ENCODE measurements at regions of chr5 and their contacts with region 1.

Region 1: GRCh38 chr5:138178516-138179276 is at the starts of genes BRD8 and KIF20A:
- DNase-seq: peak; percentile 98
- ATAC-seq: peak; percentile 91
- H3K4me3 Mint-ChIP-seq: no peak within 1 kb of the TSS
- H3K27ac Mint-ChIP-seq: no peak within 1 kb of the TSS
- H3K4me1 Mint-ChIP-seq: peaks cover 37% of the 10 kb centered on the region
- H3K27me3 Mint-ChIP-seq: no peaks in the 10 kb centered on the region
- total RNA-seq, gene BRD8: 74.1 to 86.7 TPM
- total RNA-seq, gene KIF20A: 61.7 to 64.3 TPM

Region 2: DNA sequence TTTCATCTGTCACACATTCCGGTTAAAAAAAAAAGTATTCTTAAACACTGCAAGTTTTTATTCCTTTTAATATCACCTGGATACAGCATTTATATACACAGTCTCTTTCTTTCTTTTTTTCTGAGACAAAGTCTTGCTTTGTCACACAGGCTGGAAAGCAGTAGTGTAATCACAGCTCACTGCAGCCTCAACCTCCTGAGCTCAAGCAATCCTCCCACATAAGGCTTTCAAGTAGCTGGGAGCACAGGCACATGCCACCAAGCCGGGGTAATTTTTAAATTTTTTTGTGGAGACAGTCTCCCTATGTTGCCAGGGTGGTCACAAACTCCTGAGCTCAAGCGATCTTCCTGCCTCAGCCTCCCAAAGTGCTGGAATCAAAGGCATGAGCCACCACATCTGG is 14.1 kb after region 1 on chr5:
- CTCF ChIA-PET with region 1: interaction called, 12 read pairs
- DNase-seq: no peak
- ATAC-seq: no peak
- H3K4me3 Mint-ChIP-seq: no peak overlapping the region
- H3K27ac Mint-ChIP-seq: no peak overlapping the region
- H3K4me1 Mint-ChIP-seq: no peaks in the 10 kb centered on the region
- H3K27me3 Mint-ChIP-seq: no peaks in the 10 kb centered on the region

Region 3: GRCh38 chr5:138316355-138316754 is 137.7 kb after region 1 on chr5:
- CTCF ChIA-PET with region 1: no interaction called
- DNase-seq: no peak
- ATAC-seq: no peak
- H3K4me3 Mint-ChIP-seq: no peak overlapping the region
- H3K27ac Mint-ChIP-seq: no peak overlapping the region
- H3K4me1 Mint-ChIP-seq: no peaks in the 10 kb centered on the region
- H3K27me3 Mint-ChIP-seq: no peaks in the 10 kb centered on the region

Region 4: DNA sequence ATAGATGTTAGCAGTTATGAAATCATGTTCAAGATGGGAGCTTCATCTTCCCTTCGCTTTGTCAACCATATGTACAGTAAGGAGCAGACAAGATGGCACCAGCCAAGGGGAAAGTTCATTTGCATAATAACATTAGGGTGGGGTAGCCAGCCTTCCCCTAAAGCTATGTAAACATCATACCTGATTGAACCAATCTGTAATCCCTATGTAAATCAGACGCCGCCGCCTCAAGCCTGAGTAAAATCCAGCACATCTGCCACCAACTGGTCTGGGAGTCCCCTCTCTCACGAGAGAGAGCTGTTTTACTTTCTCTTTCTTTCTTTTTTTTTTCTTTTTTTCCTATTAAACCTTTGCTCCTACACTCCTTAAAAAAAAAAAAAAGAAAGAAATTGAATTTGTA is 229.3 kb after region 1 on chr5:
- CTCF ChIA-PET with region 1: interaction called, 22 read pairs
- DNase-seq: peak; percentile 77
- ATAC-seq: peak; percentile 97
- H3K4me3 Mint-ChIP-seq: peak overlapping the region; percentile 49
- H3K27ac Mint-ChIP-seq: peak overlapping the region; percentile 68
- H3K4me1 Mint-ChIP-seq: peaks cover 22% of the 10 kb centered on the region
- H3K27me3 Mint-ChIP-seq: no peaks in the 10 kb centered on the region